ENCODE measurements at regions of chr11 and their contacts with region 1.

Region 1: GRCh38 chr11:125625630-125626287 is 796 bp downstream of the CHEK1 start:
- DNase-seq: peak; percentile 66 to 91 (median 78)
- ATAC-seq: peak; percentile 89
- H3K4me3 ChIP-seq: peak overlapping the region; percentile 87
- H3K4me3 Mint-ChIP-seq: peak overlapping the region; percentile 100
- H3K27ac ChIP-seq: peak overlapping the region; percentile 94 to 98
- H3K27ac Mint-ChIP-seq: peak overlapping the region; percentile 66
- H3K4me1 ChIP-seq: peaks cover 19% of the 10 kb centered on the region
- H3K4me1 Mint-ChIP-seq: peaks cover 22% of the 10 kb centered on the region
- H3K27me3 ChIP-seq: no peaks in the 10 kb centered on the region
- H3K27me3 Mint-ChIP-seq: no peaks in the 10 kb centered on the region
- CTCF ChIP-seq: no peak

Region 2: DNA sequence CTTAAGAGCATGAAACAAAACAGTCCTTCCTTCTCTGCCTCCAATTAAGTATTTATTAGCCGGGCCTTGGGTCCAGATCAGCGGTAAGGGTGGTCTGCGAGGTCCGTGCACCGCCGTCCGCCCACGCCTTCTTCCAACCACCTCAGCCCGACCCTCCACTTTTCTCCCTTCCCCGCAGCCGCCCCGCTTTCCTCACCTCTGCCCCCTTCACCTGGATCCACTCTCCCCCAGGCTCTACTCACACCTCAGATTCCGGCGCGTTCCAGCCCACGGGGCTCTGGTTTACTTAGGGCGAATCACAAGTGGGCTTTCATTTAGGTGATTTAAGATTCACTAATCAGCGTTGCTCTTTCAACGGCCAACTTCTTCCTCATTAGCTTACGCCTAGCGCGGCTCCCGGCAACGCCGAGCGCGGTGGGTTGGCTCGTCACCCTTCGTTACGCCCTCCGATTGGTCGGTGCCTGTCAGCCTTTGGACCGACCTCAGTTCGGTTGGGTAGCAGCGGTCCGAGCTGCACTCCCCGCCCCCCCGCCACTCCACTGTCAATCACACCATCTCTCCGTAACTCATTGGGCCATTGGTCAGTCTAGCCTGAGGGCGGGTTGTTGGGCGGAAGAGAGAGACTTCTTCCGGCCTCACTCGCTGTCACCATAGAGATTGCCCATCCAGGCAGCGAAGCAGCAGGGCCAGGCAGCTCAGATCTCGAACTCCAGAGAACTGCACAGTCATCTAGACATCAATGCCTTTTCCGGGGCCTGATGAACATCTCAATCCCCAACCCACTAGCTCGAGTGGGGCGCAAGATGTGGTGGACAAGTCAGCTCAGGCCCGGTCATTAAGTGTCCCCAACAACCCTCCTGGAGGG is 514.2 kb before region 1 on chr11 and contains the start of gene TMEM218:
- CTCF ChIA-PET with region 1: no interaction called
- POLR2A ChIA-PET with region 1: no interaction called
- intact Hi-C with region 1: loop called in 1 of 2 experiments (anchors 10 kb)
- DNase-seq: peak; percentile 89 to 99 (median 92)
- ATAC-seq: peak; percentile 94
- H3K4me3 ChIP-seq: peak within 1 kb of the TSS; percentile 90
- H3K4me3 Mint-ChIP-seq: peak within 1 kb of the TSS; percentile 97
- H3K27ac ChIP-seq: peak within 1 kb of the TSS; percentile 29 to 77
- H3K27ac Mint-ChIP-seq: peak within 1 kb of the TSS; percentile 84
- H3K4me1 ChIP-seq: peaks cover 16% of the 10 kb centered on the region
- H3K4me1 Mint-ChIP-seq: peaks cover 26% of the 10 kb centered on the region
- H3K27me3 ChIP-seq: no peaks in the 10 kb centered on the region
- H3K27me3 Mint-ChIP-seq: no peaks in the 10 kb centered on the region
- CTCF ChIP-seq: no peak
- total RNA-seq, gene TMEM218: 3.9 to 4.4 TPM

Region 3: DNA sequence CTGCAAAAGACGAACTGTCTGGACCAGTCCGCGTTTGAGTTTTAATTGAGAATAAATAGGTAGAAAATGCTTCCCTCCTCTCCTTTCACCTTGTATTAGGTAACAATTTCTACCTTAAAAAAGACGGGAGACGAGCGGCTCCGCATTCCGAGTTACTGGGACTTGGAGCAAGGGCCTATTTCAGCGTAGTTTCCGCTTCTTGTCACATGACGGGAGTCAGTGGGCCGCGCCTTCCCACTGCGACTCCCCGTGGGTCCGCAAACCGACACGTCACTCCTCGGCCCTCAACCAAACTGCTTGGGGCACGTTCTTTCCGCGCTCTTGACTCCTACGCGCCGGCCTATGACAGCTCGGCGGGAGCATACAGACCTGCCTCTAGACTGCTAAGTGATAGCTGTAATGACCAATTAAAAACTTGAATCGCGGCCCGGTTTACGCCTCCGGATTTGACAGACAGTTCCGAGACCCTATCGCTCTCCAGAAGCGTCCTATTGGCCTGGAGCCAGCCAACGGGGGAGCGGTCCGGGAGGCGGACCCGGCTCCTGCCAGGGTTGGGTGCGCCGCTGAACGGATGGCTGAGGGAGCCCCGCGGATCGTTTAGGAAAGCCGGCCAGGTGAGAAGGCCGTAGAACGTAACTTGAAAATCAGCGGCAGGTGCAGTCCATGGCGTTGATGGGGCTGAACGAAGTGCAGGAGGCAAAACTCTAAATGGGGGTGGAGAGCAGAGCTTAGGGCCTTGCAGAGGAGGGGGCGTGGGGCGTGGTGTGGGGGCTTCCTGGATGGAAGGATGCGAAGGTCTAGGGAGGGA is 33.2 kb before region 1 on chr11 and contains the start of gene STT3A:
- CTCF ChIA-PET with region 1: interaction called, 4 read pairs
- POLR2A ChIA-PET with region 1: interaction called, 61 read pairs
- intact Hi-C with region 1: loop called (anchors 2 kb)
- DNase-seq: peak; percentile 94 to 100 (median 97)
- ATAC-seq: peak; percentile 91
- H3K4me3 ChIP-seq: peak within 1 kb of the TSS; percentile 94
- H3K4me3 Mint-ChIP-seq: peak within 1 kb of the TSS; percentile 94
- H3K27ac ChIP-seq: peak within 1 kb of the TSS; percentile 94 to 98
- H3K27ac Mint-ChIP-seq: peak within 1 kb of the TSS; percentile 96
- H3K4me1 ChIP-seq: peaks cover 32% of the 10 kb centered on the region
- H3K4me1 Mint-ChIP-seq: peaks cover 46% of the 10 kb centered on the region
- H3K27me3 ChIP-seq: no peaks in the 10 kb centered on the region
- H3K27me3 Mint-ChIP-seq: no peaks in the 10 kb centered on the region
- CTCF ChIP-seq: no peak
- total RNA-seq, gene STT3A: 35.1 to 38.6 TPM

Region 4: DNA sequence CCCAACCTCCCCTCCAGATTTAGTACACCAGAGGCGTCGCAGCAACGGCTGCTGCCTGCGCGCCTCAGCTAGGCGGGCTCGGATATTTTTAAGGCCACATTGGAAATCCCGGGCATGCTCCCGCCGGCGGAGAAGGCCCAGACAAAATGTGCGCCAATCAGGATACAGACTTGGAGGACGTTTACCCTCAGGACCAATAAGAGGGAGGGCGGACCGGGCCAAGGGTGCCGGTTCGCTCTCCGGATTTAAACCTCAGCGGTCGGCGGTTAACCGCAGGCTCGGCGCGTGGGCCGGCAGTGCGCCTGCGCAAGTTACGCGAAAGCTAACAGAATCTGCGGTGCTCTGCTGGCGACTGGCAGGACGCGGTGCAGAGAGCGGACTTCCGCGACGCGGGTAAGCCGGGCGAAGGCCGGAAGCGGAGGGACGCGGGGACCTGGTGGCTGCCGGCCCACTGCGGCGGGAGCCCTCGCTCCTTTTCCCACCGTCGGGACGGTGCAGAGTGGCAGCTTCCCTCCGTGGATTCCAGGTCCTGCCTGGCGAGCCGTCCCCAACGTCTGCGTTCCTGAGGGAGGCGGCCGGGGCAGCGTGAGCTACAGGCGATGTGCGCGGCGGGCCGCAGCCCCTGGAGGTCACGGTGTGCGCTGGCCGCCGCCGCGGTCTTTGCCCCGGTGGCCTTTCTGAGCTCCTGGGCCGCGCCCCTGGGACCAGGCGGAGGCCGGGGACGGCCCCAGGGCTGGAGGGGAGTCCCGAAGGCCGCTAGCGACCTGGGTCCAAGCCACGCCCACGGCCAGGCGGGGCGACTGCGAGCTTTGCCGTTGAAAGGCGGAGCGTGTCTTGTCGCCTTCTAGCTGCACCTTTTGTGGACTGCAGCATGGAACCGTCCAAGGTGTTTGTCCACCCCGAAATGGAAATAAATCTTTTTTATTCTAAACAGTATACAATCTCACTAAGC is 261.9 kb after region 1 on chr11 and contains the start of gene HYLS1:
- CTCF ChIA-PET with region 1: interaction called, 3 read pairs
- POLR2A ChIA-PET with region 1: interaction called, 11 read pairs
- intact Hi-C with region 1: loop called (anchors 1 to 5 kb)
- DNase-seq: peak; percentile 87 to 98 (median 91)
- ATAC-seq: peak; percentile 88
- H3K4me3 ChIP-seq: peak within 1 kb of the TSS; percentile 63
- H3K4me3 Mint-ChIP-seq: peak within 1 kb of the TSS; percentile 95
- H3K27ac ChIP-seq: peak within 1 kb of the TSS; percentile 71 to 78
- H3K27ac Mint-ChIP-seq: peak within 1 kb of the TSS; percentile 92
- H3K4me1 ChIP-seq: peaks cover 20% of the 10 kb centered on the region
- H3K4me1 Mint-ChIP-seq: peaks cover 50% of the 10 kb centered on the region
- H3K27me3 ChIP-seq: no peaks in the 10 kb centered on the region
- H3K27me3 Mint-ChIP-seq: no peaks in the 10 kb centered on the region
- CTCF ChIP-seq: no peak
- total RNA-seq, gene HYLS1: 1.2 to 1.3 TPM

Region 5: GRCh38 chr11:126051117-126051516 is 425.4 kb after region 1 on chr11:
- CTCF ChIA-PET with region 1: no interaction called
- POLR2A ChIA-PET with region 1: no interaction called
- intact Hi-C with region 1: no loop called
- DNase-seq: no peak
- ATAC-seq: no peak
- H3K4me3 ChIP-seq: no peak overlapping the region
- H3K4me3 Mint-ChIP-seq: no peak overlapping the region
- H3K27ac ChIP-seq: no peak overlapping the region
- H3K27ac Mint-ChIP-seq: no peak overlapping the region
- H3K4me1 ChIP-seq: no peaks in the 10 kb centered on the region
- H3K4me1 Mint-ChIP-seq: peaks cover 19% of the 10 kb centered on the region
- H3K27me3 ChIP-seq: no peaks in the 10 kb centered on the region
- H3K27me3 Mint-ChIP-seq: no peaks in the 10 kb centered on the region
- CTCF ChIP-seq: no peak

Region 6: DNA sequence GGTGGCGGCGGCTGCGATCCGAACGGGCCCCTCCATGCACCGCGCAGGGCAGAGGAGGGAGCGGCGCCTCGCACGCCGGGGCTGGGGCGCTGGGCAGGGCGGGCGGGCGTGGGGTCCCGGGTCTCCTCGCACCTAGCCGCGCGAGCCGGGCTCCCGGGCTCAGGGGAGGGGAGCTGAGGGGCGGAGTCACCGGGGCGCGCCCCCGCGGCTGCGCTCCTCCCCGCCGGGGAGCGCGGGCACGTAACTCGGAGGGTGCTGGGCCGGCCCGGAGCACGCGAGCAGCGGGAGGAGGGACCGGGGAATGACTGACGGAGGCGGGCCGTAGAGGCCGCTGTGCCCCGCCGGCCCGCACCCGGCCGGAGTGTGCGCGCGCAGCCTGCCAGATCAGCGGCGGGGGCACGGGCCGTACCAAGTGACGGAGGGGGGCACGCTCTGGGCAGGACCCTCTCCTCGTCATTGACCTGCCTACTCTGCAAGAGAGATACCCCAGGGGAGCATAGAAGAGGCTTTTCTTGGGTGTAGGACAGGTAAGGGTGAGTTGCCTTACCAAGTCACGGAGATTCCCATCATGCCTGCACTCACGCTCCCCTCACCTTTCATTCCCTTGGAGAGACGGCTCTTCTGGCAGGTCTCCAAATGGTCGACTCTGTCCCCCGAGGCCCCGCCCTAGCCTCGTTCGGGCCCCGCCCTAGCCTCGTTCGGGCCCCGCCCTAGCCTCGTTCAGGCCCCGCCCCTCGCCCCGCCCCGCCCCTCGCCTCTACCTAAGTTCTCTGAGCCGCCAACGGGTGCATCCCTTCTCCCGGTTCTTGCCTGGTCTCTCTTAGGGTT is 437.1 kb after region 1 on chr11 and contains the start of gene CDON:
- CTCF ChIA-PET with region 1: no interaction called
- POLR2A ChIA-PET with region 1: no interaction called
- intact Hi-C with region 1: loop called in 1 of 2 experiments (anchors 5 kb)
- DNase-seq: peak; percentile 84 to 97 (median 90)
- ATAC-seq: peak; percentile 85
- H3K4me3 ChIP-seq: peak within 1 kb of the TSS; percentile 55
- H3K4me3 Mint-ChIP-seq: peak within 1 kb of the TSS; percentile 93
- H3K27ac ChIP-seq: peak within 1 kb of the TSS; percentile 55 to 84
- H3K27ac Mint-ChIP-seq: peak within 1 kb of the TSS; percentile 85
- H3K4me1 ChIP-seq: peaks cover 13% of the 10 kb centered on the region
- H3K4me1 Mint-ChIP-seq: peaks cover 16% of the 10 kb centered on the region
- H3K27me3 ChIP-seq: peaks cover 0 to 6% of the 10 kb centered on the region in 2 experiments
- H3K27me3 Mint-ChIP-seq: peaks cover 13% of the 10 kb centered on the region
- CTCF ChIP-seq: no peak
- total RNA-seq, gene CDON: 1.9 to 2.7 TPM

Region 7: DNA sequence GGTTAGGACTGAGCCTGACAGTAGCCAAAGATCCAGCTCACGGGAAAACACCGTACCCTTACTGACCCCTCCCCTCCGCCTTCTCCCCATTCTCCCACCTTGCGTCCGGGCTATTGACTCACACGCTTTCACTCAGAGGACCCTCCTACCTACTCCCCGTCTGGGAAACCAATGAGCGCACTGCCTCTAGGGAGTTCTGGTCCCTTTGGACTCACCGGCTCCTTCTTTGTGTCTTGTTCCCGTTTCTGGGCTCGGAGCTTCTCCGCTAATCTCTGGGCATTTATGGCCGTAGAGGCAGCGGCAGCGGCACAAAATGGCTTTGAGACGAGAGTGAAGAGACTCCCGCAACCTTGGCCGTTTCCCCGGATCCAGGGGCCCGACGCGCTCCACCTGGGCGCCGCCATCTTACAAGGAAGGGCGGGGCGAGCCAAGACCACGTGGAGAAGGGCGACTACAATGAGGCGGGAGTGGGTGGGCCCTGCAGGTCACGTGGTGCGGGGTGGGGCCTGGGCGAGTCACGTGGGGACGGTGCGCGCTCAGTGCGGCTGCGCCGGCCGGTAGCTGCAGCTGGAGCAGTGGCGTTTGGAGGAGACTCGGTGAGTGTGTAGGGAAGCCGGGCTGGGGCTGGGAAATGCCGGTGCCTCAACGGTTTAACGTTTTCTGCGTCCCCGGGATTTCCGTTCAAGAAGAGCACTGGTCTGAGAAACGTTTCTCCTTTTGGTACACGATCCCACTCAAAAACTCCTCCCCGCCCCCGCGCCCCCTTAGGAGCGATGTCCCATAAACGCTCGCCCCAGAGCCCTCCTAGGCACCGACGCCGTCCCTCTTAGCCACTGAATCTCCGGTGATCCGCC is 585.7 kb after region 1 on chr11 and contains the starts of genes FAM118B and RPUSD4:
- CTCF ChIA-PET with region 1: no interaction called
- POLR2A ChIA-PET with region 1: interaction called, 3 read pairs
- intact Hi-C with region 1: loop called in 1 of 2 experiments (anchors 5 kb)
- DNase-seq: peak; percentile 96 to 100 (median 98)
- ATAC-seq: peak; percentile 97
- H3K4me3 ChIP-seq: peak within 1 kb of the TSS; percentile 99
- H3K4me3 Mint-ChIP-seq: peak within 1 kb of the TSS; percentile 100
- H3K27ac ChIP-seq: peak within 1 kb of the TSS; percentile 50 to 78
- H3K27ac Mint-ChIP-seq: peak within 1 kb of the TSS; percentile 93
- H3K4me1 ChIP-seq: peaks cover 21% of the 10 kb centered on the region
- H3K4me1 Mint-ChIP-seq: peaks cover 61% of the 10 kb centered on the region
- H3K27me3 ChIP-seq: no peaks in the 10 kb centered on the region
- H3K27me3 Mint-ChIP-seq: no peaks in the 10 kb centered on the region
- CTCF ChIP-seq: no peak
- total RNA-seq, gene FAM118B: 1.0 to 1.8 TPM
- total RNA-seq, gene RPUSD4: 33.1 to 37.6 TPM